Dorsolateral prefrontal cortex (tissue), 120 donors: ENCODE measurements at regions of chr5 and their contacts with region 1.

Region 1: DNA sequence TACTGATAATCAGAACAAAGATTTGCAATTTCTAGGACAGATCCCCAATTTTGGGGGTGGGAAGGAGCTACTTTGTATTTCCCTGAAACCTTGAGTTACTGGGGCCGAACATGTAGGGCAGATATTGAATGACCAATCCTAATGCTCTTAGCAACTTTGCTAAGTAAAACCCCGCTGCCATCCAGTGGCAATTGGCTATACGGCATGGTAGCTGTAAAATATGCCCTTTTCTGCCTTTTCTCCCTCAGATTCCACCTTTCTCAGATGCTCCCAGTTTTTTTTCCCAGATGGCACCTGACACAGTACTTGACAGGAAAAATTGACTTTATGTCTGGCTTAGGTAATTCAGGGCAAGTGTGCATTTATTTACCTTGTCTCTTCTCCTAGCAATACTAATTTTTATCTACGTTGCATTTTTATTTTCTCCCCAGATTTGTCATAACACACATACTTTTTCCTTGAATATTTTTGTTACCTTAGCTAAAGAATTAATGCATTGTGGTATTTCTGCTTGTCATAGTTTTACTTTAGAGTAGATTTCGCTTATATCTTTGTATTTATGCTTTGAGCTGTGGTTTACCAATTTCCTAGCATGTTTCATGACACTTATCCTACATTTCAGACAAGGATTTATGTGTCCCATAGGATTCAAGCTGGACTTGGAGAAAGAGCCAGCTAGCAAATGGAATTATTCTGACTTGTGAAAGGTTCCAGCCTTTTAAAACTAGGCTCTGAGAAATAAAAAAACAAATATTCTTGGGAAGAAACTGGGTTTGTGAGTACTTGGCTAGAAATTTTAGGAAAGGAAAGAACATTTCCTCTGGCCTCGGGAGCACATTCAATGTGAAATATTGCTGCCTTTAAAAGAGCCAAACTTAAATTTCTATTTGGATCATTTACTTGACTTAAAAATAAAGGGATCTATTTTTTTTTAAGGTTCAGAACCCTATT is 37.4 kb downstream of the PIK3R1 start:
- DNase-seq: peak in 8 of 10 donors; percentile 52 to 77 (median 60)
- H3K4me3 ChIP-seq: peak overlapping the region in 19 of 59 donors; percentile 0 to 28 (median 5)
- H3K27ac ChIP-seq: peak overlapping the region; percentile 18 to 86 (median 75)
- H3K27me3 ChIP-seq: no peaks in the 10 kb centered on the region
- CTCF ChIP-seq: peak; percentile 35 to 86 (median 70)

Region 2: GRCh38 chr5:67493676-67494075 is 759.3 kb before region 1 on chr5:
- intact Hi-C with region 1: loop called (anchors 5 to 10 kb)
- DNase-seq: peak; percentile 42 to 86 (median 69)
- H3K4me3 ChIP-seq: peak overlapping the region in 1 of 59 donors; percentile 0
- H3K27ac ChIP-seq: peak overlapping the region in 48 of 59 donors; percentile 5 to 80 (median 58)
- H3K27me3 ChIP-seq: no peaks in the 10 kb centered on the region
- CTCF ChIP-seq: peak; percentile 25 to 79 (median 63)

Region 3: DNA sequence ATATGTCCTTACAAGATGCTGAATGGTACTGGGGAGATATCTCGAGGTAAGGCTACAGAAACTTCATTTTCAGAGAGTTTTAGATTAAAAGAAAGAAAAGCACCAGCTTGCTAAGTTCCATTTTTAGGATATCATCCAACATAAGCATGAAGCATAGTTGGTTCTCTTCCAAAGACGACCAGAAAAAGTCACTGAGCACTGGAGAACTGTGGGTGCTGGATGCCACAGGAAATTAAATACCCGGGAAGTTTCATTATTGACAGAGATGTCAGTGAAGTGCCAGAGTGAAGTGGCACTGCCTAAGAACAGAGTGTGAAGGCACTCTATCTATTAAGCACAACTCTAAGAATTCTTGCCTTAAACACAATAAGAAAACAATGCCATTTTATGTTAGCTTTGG is 39.4 kb after region 1 on chr5:
- intact Hi-C with region 1: no loop called
- DNase-seq: no peak
- H3K4me3 ChIP-seq: peak overlapping the region in 58 of 59 donors; percentile 22 to 80 (median 64)
- H3K27ac ChIP-seq: peak overlapping the region in 55 of 59 donors; percentile 17 to 98 (median 95)
- H3K27me3 ChIP-seq: no peaks in the 10 kb centered on the region
- CTCF ChIP-seq: no peak